Activated CD4-positive, alpha-beta T cell treated with anti-CD3 and anti-CD28 coated beads for 36 hours (primary cell): ENCODE measurements at regions of chr15 and their contacts with region 1.

Region 1: GRCh38 chr15:56786966-56787365 is 53.7 kb upstream of the ZNF280D start:
- DNase-seq: no peak
- ATAC-seq: peak; percentile 96
- H3K4me3 Mint-ChIP-seq: no peak overlapping the region
- H3K27ac Mint-ChIP-seq: peak overlapping the region; percentile 29
- H3K4me1 Mint-ChIP-seq: peaks cover 14% of the 10 kb centered on the region
- H3K27me3 Mint-ChIP-seq: peaks cover 3% of the 10 kb centered on the region

Region 2: GRCh38 chr15:56371495-56372147 is 415.3 kb before region 1 on chr15:
- CTCF ChIA-PET with region 1: no interaction called
- POLR2A ChIA-PET with region 1: no interaction called
- intact Hi-C with region 1: loop called in 1 of 2 experiments (anchors 5 kb)
- DNase-seq: no peak
- ATAC-seq: peak; percentile 85
- H3K4me3 Mint-ChIP-seq: no peak overlapping the region
- H3K27ac Mint-ChIP-seq: no peak overlapping the region
- H3K4me1 Mint-ChIP-seq: peaks cover 10% of the 10 kb centered on the region
- H3K27me3 Mint-ChIP-seq: peaks cover 18% of the 10 kb centered on the region

Region 3: DNA sequence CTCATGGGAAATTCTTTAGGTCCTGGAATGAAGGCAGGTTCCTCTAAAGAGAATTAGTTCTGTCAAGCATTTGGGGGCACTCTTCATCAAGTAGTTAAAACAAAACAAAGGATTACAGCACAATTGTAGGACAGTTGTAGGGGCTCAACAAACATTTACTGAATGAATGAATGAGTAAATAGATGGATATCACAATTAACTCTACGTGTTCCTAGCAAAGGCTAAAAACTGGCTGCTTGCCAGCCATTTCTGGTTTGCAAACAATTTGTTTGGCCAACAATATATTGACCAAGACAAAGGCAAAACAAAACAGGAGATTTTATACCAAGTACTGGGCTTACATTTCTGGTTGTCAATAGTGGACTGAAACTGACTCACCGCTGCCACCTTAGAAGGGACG is 170.4 kb before region 1 on chr15:
- CTCF ChIA-PET with region 1: no interaction called
- POLR2A ChIA-PET with region 1: no interaction called
- intact Hi-C with region 1: no loop called
- DNase-seq: no peak
- ATAC-seq: no peak
- H3K4me3 Mint-ChIP-seq: no peak overlapping the region
- H3K27ac Mint-ChIP-seq: no peak overlapping the region
- H3K4me1 Mint-ChIP-seq: peaks cover 10% of the 10 kb centered on the region
- H3K27me3 Mint-ChIP-seq: peaks cover 8% of the 10 kb centered on the region

Region 4: DNA sequence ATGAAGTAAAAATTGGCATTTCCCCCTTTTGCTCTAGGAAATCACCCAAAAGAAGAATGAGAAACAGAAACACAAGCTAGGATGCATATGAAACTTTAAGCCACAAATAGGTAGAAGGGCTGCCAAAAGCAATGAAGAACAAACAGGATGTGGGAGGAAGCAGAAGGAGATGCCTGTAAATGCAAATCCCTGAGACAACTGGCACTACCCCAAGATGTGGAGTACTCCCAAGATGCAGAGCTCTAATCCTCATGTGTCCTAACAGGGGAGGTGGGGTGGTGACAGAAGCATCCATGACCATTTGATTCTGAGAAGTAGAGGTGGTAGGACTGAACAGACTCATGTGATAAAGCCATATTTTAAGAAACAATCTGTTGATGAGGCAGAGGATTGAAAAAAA is 21.7 kb before region 1 on chr15:
- CTCF ChIA-PET with region 1: no interaction called
- POLR2A ChIA-PET with region 1: no interaction called
- intact Hi-C with region 1: loop called (anchors 1 kb)
- DNase-seq: no peak
- ATAC-seq: peak; percentile 43
- H3K4me3 Mint-ChIP-seq: no peak overlapping the region
- H3K27ac Mint-ChIP-seq: no peak overlapping the region
- H3K4me1 Mint-ChIP-seq: peaks cover 21% of the 10 kb centered on the region
- H3K27me3 Mint-ChIP-seq: no peaks in the 10 kb centered on the region